ENCODE measurements at regions of chr1 and their contacts with region 1.

Region 1: DNA sequence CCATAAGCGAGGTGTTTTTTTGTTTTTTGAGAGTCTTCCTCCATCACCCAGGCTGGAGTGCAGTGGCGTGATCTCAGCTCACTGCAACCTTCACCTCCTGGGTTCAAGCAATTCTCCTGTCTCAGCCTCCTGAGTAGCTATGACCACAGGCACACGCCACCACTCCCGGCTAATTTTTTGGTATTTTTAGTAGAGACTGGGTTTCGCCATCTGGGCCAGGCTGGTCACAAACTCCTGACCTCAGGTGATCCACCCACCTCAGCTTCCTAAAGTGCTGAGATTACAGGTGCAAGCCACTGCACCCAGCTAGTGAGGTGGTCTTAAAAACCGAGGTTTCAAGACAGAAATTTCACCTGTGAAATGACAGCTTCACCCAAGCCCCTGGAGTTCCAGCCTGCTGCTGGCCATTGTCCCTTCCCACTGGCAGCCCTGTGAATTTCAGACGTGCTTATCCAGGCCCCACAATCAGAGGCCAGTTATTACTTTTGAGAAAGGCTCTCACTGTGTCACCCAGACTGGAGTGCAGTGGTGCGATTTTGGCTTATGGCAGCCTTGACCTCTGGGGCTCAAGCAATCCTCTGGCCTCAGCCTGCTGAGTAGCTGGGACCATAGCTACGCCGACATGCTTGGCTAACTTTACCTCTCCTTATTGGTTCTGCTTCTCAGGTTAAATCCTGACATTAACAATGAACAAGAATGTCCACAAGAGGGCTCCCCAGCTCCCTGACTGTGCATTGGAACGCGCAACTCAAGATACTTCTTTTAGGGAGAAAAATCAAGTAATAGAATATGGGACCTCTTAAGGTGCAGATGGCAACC is 19.4 kb downstream of the ENO1 start:
- DNase-seq: peak; percentile 53
- H3K4me3 ChIP-seq: no peak overlapping the region
- H3K27ac ChIP-seq: peak overlapping the region in 1 of 2 experiments; percentile 75; a peak in 3 of 4 replicates
- H3K4me1 ChIP-seq: no peaks in the 10 kb centered on the region; a peak in 1 of 4 replicates
- H3K27me3 ChIP-seq: no peaks in the 10 kb centered on the region
- CTCF ChIP-seq: peak; percentile 69
- EP300 ChIP-seq: no peak
- RAD21 ChIP-seq: peak; percentile 61

Region 2: DNA sequence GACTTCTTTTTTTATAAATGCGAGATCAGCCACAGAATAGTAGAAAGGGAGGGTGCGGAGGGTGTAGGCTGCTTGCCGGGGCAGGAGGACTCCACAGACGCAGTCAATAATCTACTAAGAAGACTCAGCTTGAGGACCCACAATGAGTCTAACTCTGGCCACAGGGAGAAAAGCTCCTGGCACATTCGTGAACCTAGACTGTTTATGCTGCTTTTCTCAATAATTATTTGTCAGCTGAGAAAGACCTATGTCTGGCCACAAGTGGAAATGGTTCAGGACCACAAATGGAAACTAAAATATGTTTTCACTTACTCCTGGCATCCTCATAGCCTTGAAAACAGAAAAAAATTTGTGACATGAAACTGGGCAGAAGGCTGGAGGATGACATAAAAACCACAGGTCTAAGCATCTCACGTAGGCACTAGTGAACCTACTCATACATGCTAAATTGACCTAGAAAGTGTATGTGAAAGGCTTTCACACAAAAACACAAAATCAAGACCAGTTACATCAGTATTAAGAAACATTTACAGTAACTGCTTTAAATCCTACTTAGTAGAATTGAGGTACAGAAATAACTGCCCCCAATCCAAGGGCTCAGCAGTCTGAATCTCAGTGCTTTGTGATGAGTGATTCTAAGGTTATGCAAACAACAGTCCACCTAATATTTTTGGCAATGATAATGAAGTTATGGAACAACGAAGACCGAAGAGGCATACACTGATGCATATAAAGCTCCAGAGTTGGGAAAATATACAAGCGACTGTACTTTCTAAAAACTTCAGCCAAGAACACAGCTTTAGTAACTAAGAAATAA is 381.7 kb before region 1 on chr1:
- CTCF ChIA-PET with region 1: no interaction called
- POLR2A ChIA-PET with region 1: no interaction called
- DNase-seq: no peak
- H3K4me3 ChIP-seq: no peak overlapping the region
- H3K27ac ChIP-seq: peak overlapping the region; percentile 55 to 77
- H3K4me1 ChIP-seq: peaks cover 32 to 52% of the 10 kb centered on the region in 2 experiments
- H3K27me3 ChIP-seq: no peaks in the 10 kb centered on the region
- CTCF ChIP-seq: no peak
- EP300 ChIP-seq: peak in 1 of 2 experiments; percentile 26; a peak in 2 of 4 replicates
- RAD21 ChIP-seq: no peak

Region 3: GRCh38 chr1:8794569-8794968 is 64.5 kb before region 1 on chr1:
- CTCF ChIA-PET with region 1: no interaction called
- POLR2A ChIA-PET with region 1: no interaction called
- DNase-seq: no peak
- H3K4me3 ChIP-seq: no peak overlapping the region
- H3K27ac ChIP-seq: no peak overlapping the region
- H3K4me1 ChIP-seq: peaks cover 0 to 5% of the 10 kb centered on the region in 2 experiments; a peak in 2 of 4 replicates
- H3K27me3 ChIP-seq: no peaks in the 10 kb centered on the region
- CTCF ChIP-seq: no peak
- EP300 ChIP-seq: no peak
- RAD21 ChIP-seq: no peak

Region 4: GRCh38 chr1:8873506-8874229 is 14.6 kb after region 1 on chr1:
- CTCF ChIA-PET with region 1: interaction called, 31 read pairs
- POLR2A ChIA-PET with region 1: interaction called, 5 read pairs
- DNase-seq: no peak
- H3K4me3 ChIP-seq: peak overlapping the region in 1 of 2 experiments; percentile 30; a peak in 1 of 4 replicates
- H3K27ac ChIP-seq: peak overlapping the region; percentile 56 to 97
- H3K4me1 ChIP-seq: peaks cover 32 to 61% of the 10 kb centered on the region in 2 experiments
- H3K27me3 ChIP-seq: no peaks in the 10 kb centered on the region
- CTCF ChIP-seq: no peak
- EP300 ChIP-seq: peak; percentile 12 to 71; a peak in 1 of 4 replicates
- RAD21 ChIP-seq: no peak

Region 5: GRCh38 chr1:8878448-8879347 is 19.6 kb after region 1 on chr1 and contains the start of gene ENO1:
- CTCF ChIA-PET with region 1: interaction called, 31 read pairs
- POLR2A ChIA-PET with region 1: interaction called, 4 read pairs
- DNase-seq: peak; percentile 100
- H3K4me3 ChIP-seq: peak within 1 kb of the TSS; percentile 78 to 89
- H3K27ac ChIP-seq: peak within 1 kb of the TSS; percentile 94 to 97
- H3K4me1 ChIP-seq: peaks cover 31 to 42% of the 10 kb centered on the region in 2 experiments
- H3K27me3 ChIP-seq: no peaks in the 10 kb centered on the region
- CTCF ChIP-seq: no peak
- EP300 ChIP-seq: no peak
- RAD21 ChIP-seq: no peak
- polyA plus RNA-seq, gene ENO1: 1,578 and 1,599 TPM in 2 replicates

Region 6: GRCh38 chr1:8889925-8890785 is 31.1 kb after region 1 on chr1:
- CTCF ChIA-PET with region 1: interaction called, 10 read pairs
- POLR2A ChIA-PET with region 1: no interaction called
- DNase-seq: peak; percentile 92
- H3K4me3 ChIP-seq: peak overlapping the region; percentile 1 to 55; a peak in 3 of 4 replicates
- H3K27ac ChIP-seq: peak overlapping the region; percentile 89 to 96
- H3K4me1 ChIP-seq: peaks cover 6 to 8% of the 10 kb centered on the region in 2 experiments; a peak in 3 of 4 replicates
- H3K27me3 ChIP-seq: no peaks in the 10 kb centered on the region
- CTCF ChIP-seq: no peak
- EP300 ChIP-seq: peak; percentile 71 to 76; a peak in 3 of 4 replicates
- RAD21 ChIP-seq: 0 out of 2 replicates have a peak, but pooled peaks have one; percentile 1

Region 7: DNA sequence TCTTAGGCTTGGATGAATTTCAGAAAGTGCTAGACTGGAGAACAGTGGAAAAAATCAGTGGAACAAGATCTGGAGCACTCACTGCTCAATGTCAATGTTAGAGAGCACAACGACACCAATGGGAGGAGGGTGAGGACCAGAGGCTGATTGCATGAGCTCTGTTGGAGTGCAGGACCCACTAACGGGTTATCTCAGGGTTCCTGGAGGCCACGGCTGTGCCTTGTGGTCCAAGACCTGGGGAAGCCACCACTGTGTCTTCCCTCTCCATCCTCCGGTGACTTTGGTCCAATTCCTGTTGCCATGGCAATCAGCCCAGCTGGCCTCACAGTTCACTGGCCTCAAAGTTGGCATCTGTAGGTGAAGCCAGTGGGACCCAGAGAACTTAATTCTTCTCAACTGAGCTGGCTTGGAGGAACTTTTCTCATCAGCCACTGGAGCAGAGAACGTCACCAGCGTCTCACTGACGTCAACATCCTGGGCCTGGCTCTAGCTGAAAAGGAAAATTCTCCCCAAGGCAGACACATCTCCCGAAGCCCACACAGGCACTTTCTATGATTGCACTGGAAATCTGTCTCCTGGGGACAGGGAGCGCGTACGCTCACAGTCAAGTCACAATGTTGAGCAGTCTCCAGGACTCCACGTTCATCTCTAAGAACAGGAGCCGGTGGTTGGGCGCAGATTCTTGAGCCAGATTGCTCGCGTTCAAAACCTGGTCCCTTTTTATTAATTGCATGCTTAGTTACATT is 291.7 kb after region 1 on chr1:
- CTCF ChIA-PET with region 1: no interaction called
- POLR2A ChIA-PET with region 1: no interaction called
- DNase-seq: no peak
- H3K4me3 ChIP-seq: no peak overlapping the region
- H3K27ac ChIP-seq: no peak overlapping the region
- H3K4me1 ChIP-seq: no peaks in the 10 kb centered on the region
- H3K27me3 ChIP-seq: no peaks in the 10 kb centered on the region
- CTCF ChIP-seq: no peak
- EP300 ChIP-seq: no peak
- RAD21 ChIP-seq: no peak